ENCODE measurements at regions of chr7 and their contacts with region 1.

Region 1: DNA sequence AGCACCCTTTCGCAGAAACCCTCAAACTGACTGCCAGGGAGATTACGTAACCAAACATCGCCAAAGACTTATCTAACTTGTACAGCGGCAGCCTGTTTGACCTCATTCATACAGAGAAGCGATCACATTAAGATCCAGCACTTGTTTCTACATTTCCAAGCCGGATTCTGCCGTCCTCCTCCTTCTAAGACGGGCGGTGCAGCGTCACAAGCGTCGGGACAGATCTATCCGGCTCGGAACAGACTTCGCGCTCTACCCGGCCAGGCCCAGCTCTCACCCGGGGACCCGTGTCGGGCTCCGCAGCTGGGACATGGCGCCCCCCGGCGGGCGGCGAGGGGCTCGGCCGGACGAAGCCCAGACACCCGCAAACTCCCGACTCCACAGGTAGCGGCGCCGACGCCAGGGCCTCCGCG is 373 bp downstream of the H2AZ2 start:
- DNase-seq: peak in 8 of 9 donors; percentile 84 to 94 (median 91)
- ATAC-seq: peak; percentile 68
- H3K4me3 ChIP-seq: peak overlapping the region; percentile 91
- H3K4me3 Mint-ChIP-seq: peak overlapping the region; percentile 89 to 99 (median 94)
- H3K27ac ChIP-seq: peak overlapping the region; percentile 96
- H3K27ac Mint-ChIP-seq: peak overlapping the region; percentile 95 to 100 (median 98)
- H3K4me1 ChIP-seq: peaks cover 0 to 11% of the 10 kb centered on the region in 2 donors
- H3K4me1 Mint-ChIP-seq: peaks cover 21 to 58% (median 33%) of the 10 kb centered on the region in 7 donors
- H3K27me3 ChIP-seq: no peaks in the 10 kb centered on the region
- H3K27me3 Mint-ChIP-seq: peaks cover 0 to 2% (median 0%) of the 10 kb centered on the region in 5 donors

Region 2: GRCh38 chr7:44082541-44083207 is 764.8 kb before region 1 on chr7:
- CTCF ChIA-PET with region 1: interaction called, 5 read pairs
- POLR2A ChIA-PET with region 1: no interaction called
- intact Hi-C with region 1: loop called in 1 of 2 experiments (anchors 2 kb)
- DNase-seq: peak; percentile 88 to 99 (median 98)
- ATAC-seq: peak; percentile 96
- H3K4me3 ChIP-seq: peak overlapping the region; percentile 59
- H3K4me3 Mint-ChIP-seq: peak overlapping the region; percentile 79 to 91 (median 87)
- H3K27ac ChIP-seq: peak overlapping the region; percentile 92
- H3K27ac Mint-ChIP-seq: peak overlapping the region; percentile 44 to 95 (median 80)
- H3K4me1 ChIP-seq: peaks cover 15 to 16% of the 10 kb centered on the region in 2 donors
- H3K4me1 Mint-ChIP-seq: peaks cover 11 to 30% (median 18%) of the 10 kb centered on the region in 7 donors
- H3K27me3 ChIP-seq: no peaks in the 10 kb centered on the region
- H3K27me3 Mint-ChIP-seq: peaks cover 0 to 4% (median 0%) of the 10 kb centered on the region in 5 donors

Region 3: GRCh38 chr7:44257618-44258422 is 589.7 kb before region 1 on chr7:
- CTCF ChIA-PET with region 1: no interaction called
- POLR2A ChIA-PET with region 1: no interaction called
- intact Hi-C with region 1: loop called in 1 of 2 experiments (anchors 5 kb)
- DNase-seq: peak; percentile 44 to 75 (median 67)
- ATAC-seq: peak; percentile 83
- H3K4me3 ChIP-seq: peak overlapping the region; percentile 10
- H3K4me3 Mint-ChIP-seq: peak overlapping the region; percentile 22 to 87 (median 75)
- H3K27ac ChIP-seq: peak overlapping the region; percentile 79
- H3K27ac Mint-ChIP-seq: peak overlapping the region; percentile 82 to 96 (median 94)
- H3K4me1 ChIP-seq: peaks cover 17 to 20% of the 10 kb centered on the region in 2 donors
- H3K4me1 Mint-ChIP-seq: peaks cover 13 to 29% (median 26%) of the 10 kb centered on the region in 7 donors
- H3K27me3 ChIP-seq: no peaks in the 10 kb centered on the region
- H3K27me3 Mint-ChIP-seq: no peaks in the 10 kb centered on the region

Region 4: DNA sequence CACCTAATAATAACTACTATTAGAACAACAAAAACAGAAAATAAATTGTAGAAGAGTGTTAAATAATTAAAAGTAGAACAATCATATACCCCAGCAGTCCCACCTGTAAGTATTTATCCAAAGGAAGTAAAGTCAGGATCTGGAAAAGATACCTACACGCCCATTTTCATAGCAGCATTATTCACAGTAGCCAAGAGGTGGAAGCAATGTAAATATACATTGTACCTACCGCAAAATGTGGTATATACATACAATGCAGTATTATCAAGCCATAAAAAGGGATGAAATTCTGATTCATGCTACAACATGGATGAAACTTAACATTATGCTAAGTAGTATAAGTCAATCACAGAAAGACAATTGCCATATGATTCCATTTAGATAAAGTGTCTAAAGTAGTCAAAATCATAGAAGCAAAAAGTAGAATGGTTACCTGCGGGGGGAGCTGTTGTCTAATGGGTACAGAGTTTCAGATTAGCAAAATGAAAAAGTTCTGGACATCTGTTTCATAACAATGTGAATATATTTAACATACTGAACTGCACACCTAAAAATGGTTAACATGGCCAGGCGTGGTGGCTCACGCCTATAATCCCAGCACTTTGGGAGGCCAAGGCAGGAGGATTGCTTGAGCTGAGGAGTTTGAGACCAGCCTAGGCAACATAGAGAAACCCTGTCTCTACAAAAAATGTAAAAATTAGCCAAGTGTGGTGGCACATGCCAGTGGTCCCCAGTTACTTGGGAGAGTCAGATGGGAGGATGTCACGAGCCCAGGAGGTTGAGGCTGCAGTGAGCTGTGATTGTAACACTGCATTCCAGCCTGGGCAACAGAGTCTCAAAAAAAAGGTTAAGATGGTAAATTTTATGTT is 259.4 kb before region 1 on chr7:
- CTCF ChIA-PET with region 1: interaction called, 8 read pairs
- POLR2A ChIA-PET with region 1: interaction called, 53 read pairs
- intact Hi-C with region 1: loop called (anchors 1 kb)
- DNase-seq: peak in 7 of 9 donors; percentile 35 to 63 (median 60)
- ATAC-seq: peak; percentile 90
- H3K4me3 ChIP-seq: no peak overlapping the region
- H3K4me3 Mint-ChIP-seq: no peak overlapping the region
- H3K27ac ChIP-seq: no peak overlapping the region
- H3K27ac Mint-ChIP-seq: peak overlapping the region in 3 of 9 donors; percentile 6 to 71 (median 25)
- H3K4me1 ChIP-seq: peaks cover 0 to 4% of the 10 kb centered on the region in 2 donors
- H3K4me1 Mint-ChIP-seq: peaks cover 0 to 18% (median 6%) of the 10 kb centered on the region in 7 donors
- H3K27me3 ChIP-seq: no peaks in the 10 kb centered on the region
- H3K27me3 Mint-ChIP-seq: peaks cover 0 to 9% (median 0%) of the 10 kb centered on the region in 5 donors

Region 5: GRCh38 chr7:44748045-44748947 is 99.2 kb before region 1 on chr7 and contains the start of gene ZMIZ2:
- CTCF ChIA-PET with region 1: no interaction called
- POLR2A ChIA-PET with region 1: interaction called, 10 read pairs
- intact Hi-C with region 1: loop called (anchors 1 kb)
- DNase-seq: peak; percentile 87 to 99 (median 93)
- ATAC-seq: peak; percentile 94
- H3K4me3 ChIP-seq: peak within 1 kb of the TSS; percentile 64
- H3K4me3 Mint-ChIP-seq: peak within 1 kb of the TSS; percentile 77 to 92 (median 88)
- H3K27ac ChIP-seq: peak within 1 kb of the TSS; percentile 98
- H3K27ac Mint-ChIP-seq: peak within 1 kb of the TSS; percentile 81 to 98 (median 92)
- H3K4me1 ChIP-seq: peaks cover 21 to 22% of the 10 kb centered on the region in 2 donors
- H3K4me1 Mint-ChIP-seq: peaks cover 22 to 63% (median 45%) of the 10 kb centered on the region in 7 donors
- H3K27me3 ChIP-seq: no peaks in the 10 kb centered on the region
- H3K27me3 Mint-ChIP-seq: no peaks in the 10 kb centered on the region
- total RNA-seq, gene ZMIZ2: 108 to 187 (median 144) TPM

Region 6: DNA sequence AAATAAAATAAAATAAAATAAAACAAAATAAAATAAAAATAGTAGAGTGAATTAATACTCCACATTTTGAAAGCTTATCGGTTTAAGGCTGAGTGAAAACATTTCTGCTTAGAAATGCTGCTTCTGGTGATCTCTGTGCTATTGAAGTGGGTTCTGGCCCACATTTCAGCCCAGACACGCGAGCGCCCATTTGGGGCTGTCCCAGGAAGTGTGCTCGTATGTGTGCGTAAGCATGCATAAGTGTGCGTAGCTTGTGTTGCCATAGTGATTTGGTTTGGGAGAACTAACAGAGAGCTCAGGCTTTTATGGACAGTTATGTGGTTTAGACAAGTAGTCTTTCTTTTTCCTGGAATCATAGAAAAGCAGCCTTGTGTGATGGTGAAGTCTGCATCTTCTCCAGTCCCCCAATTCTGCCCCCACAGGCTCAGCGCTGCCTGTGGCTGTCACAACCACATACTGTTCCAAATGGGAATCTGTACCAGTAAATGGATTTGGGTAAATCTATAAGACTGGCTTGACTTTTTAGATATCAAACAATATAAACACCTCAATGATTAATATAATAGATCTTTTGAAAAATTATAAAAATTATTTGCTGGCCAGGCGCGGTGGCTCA is 67.6 kb after region 1 on chr7:
- CTCF ChIA-PET with region 1: no interaction called
- POLR2A ChIA-PET with region 1: no interaction called
- intact Hi-C with region 1: loop called in 1 of 2 experiments (anchors 1 kb)
- DNase-seq: peak in 8 of 9 donors; percentile 44 to 87 (median 74)
- ATAC-seq: peak; percentile 99
- H3K4me3 ChIP-seq: no peak overlapping the region
- H3K4me3 Mint-ChIP-seq: peak overlapping the region in 7 of 10 donors; percentile 12 to 71 (median 53)
- H3K27ac ChIP-seq: peak overlapping the region; percentile 48
- H3K27ac Mint-ChIP-seq: peak overlapping the region in 8 of 9 donors; percentile 61 to 92 (median 84)
- H3K4me1 ChIP-seq: no peaks in the 10 kb centered on the region
- H3K4me1 Mint-ChIP-seq: peaks cover 0 to 28% (median 5%) of the 10 kb centered on the region in 7 donors
- H3K27me3 ChIP-seq: no peaks in the 10 kb centered on the region
- H3K27me3 Mint-ChIP-seq: no peaks in the 10 kb centered on the region

Region 7: GRCh38 chr7:45080265-45080962 is 232.9 kb after region 1 on chr7:
- CTCF ChIA-PET with region 1: no interaction called
- POLR2A ChIA-PET with region 1: no interaction called
- intact Hi-C with region 1: no loop called
- DNase-seq: no peak
- ATAC-seq: peak; percentile 30
- H3K4me3 ChIP-seq: no peak overlapping the region
- H3K4me3 Mint-ChIP-seq: no peak overlapping the region
- H3K27ac ChIP-seq: no peak overlapping the region
- H3K27ac Mint-ChIP-seq: peak overlapping the region; percentile 17 to 84 (median 68)
- H3K4me1 ChIP-seq: no peaks in the 10 kb centered on the region
- H3K4me1 Mint-ChIP-seq: peaks cover 0 to 19% (median 3%) of the 10 kb centered on the region in 7 donors
- H3K27me3 ChIP-seq: no peaks in the 10 kb centered on the region
- H3K27me3 Mint-ChIP-seq: no peaks in the 10 kb centered on the region

Region 8: GRCh38 chr7:45136106-45137060 is 288.9 kb after region 1 on chr7:
- CTCF ChIA-PET with region 1: interaction called, 8 read pairs
- POLR2A ChIA-PET with region 1: interaction called, 6 read pairs
- intact Hi-C with region 1: loop called in 1 of 2 experiments (anchors 2 kb)
- DNase-seq: peak; percentile 38 to 81 (median 70)
- ATAC-seq: peak; percentile 91
- H3K4me3 ChIP-seq: no peak overlapping the region
- H3K4me3 Mint-ChIP-seq: peak overlapping the region in 1 of 10 donors; percentile 21
- H3K27ac ChIP-seq: no peak overlapping the region
- H3K27ac Mint-ChIP-seq: peak overlapping the region in 8 of 9 donors; percentile 0 to 84 (median 48)
- H3K4me1 ChIP-seq: peaks cover 0 to 3% of the 10 kb centered on the region in 2 donors
- H3K4me1 Mint-ChIP-seq: peaks cover 6 to 27% (median 10%) of the 10 kb centered on the region in 7 donors
- H3K27me3 ChIP-seq: no peaks in the 10 kb centered on the region
- H3K27me3 Mint-ChIP-seq: peaks cover 0 to 2% (median 0%) of the 10 kb centered on the region in 5 donors

Region 9: GRCh38 chr7:45506059-45506458 is 658.5 kb after region 1 on chr7:
- CTCF ChIA-PET with region 1: no interaction called
- POLR2A ChIA-PET with region 1: no interaction called
- intact Hi-C with region 1: no loop called
- DNase-seq: no peak
- ATAC-seq: no peak
- H3K4me3 ChIP-seq: no peak overlapping the region
- H3K4me3 Mint-ChIP-seq: no peak overlapping the region
- H3K27ac ChIP-seq: no peak overlapping the region
- H3K27ac Mint-ChIP-seq: no peak overlapping the region
- H3K4me1 ChIP-seq: no peaks in the 10 kb centered on the region
- H3K4me1 Mint-ChIP-seq: peaks cover 0 to 2% (median 0%) of the 10 kb centered on the region in 7 donors
- H3K27me3 ChIP-seq: no peaks in the 10 kb centered on the region
- H3K27me3 Mint-ChIP-seq: peaks cover 0 to 4% (median 0%) of the 10 kb centered on the region in 5 donors